AG04449 (cell line): ENCODE measurements at regions of chr16 and their contacts with region 1.

Region 1: GRCh38 chr16:58121132-58121531 is 8.0 kb downstream of the CFAP20 start:
- DNase-seq: no peak
- H3K4me3 ChIP-seq: no peak overlapping the region
- CTCF ChIP-seq: no peak

Region 2: GRCh38 chr16:58000706-58001676 is 120.1 kb before region 1 on chr16 and contains the start of gene USB1:
- CTCF ChIA-PET with region 1: interaction called, 13 read pairs
- POLR2A ChIA-PET with region 1: no interaction called
- DNase-seq: no peak
- H3K4me3 ChIP-seq: peak within 1 kb of the TSS; percentile 93
- CTCF ChIP-seq: peak; percentile 63

Region 3: GRCh38 chr16:58011652-58012051 is 109.5 kb before region 1 on chr16:
- CTCF ChIA-PET with region 1: interaction called, 15 read pairs
- POLR2A ChIA-PET with region 1: interaction called, 3 read pairs
- DNase-seq: peak; percentile 40
- H3K4me3 ChIP-seq: no peak overlapping the region
- CTCF ChIP-seq: no peak

Region 4: GRCh38 chr16:58018804-58019203 is 102.3 kb before region 1 on chr16:
- CTCF ChIA-PET with region 1: interaction called, 39 read pairs
- POLR2A ChIA-PET with region 1: no interaction called
- DNase-seq: no peak
- H3K4me3 ChIP-seq: no peak overlapping the region
- CTCF ChIP-seq: no peak

Region 5: GRCh38 chr16:58025351-58026138 is 95.6 kb before region 1 on chr16 and contains the start of gene MMP15:
- CTCF ChIA-PET with region 1: interaction called, 23 read pairs
- POLR2A ChIA-PET with region 1: no interaction called
- DNase-seq: no peak
- H3K4me3 ChIP-seq: peak within 1 kb of the TSS; percentile 60
- CTCF ChIP-seq: no peak

Region 6: GRCh38 chr16:58110571-58111301 is 10.4 kb before region 1 on chr16:
- CTCF ChIA-PET with region 1: interaction called, 15 read pairs
- POLR2A ChIA-PET with region 1: no interaction called
- DNase-seq: no peak
- H3K4me3 ChIP-seq: no peak overlapping the region
- CTCF ChIP-seq: no peak